ENCODE measurements at regions of chr11 and their contacts with region 1.

Region 1: DNA sequence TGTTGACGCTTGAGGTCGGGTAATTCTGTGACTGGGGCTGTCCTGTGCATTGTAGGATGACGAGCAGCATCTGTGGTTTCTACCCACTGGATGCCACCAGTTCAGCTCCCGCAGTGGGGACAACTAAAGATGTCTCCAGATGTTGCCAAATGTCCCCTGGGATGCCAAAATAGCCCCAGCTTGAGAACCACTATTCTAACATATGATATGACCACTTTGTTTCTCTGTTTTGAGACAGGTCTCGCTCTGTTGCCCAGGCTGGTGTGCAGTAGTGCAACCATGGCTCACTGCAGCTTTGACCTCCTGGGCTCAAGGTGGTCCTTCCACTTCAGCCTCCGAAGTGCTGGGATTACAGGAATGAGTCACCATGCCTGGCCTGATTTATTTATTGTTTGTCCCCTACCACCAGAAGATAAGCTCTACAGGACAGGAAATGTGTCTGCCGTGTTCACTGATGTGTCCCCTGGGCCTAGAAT is 4.4 kb upstream of the MEN1 start:
- DNase-seq: no peak
- ATAC-seq: no peak
- H3K4me3 ChIP-seq: no peak overlapping the region
- H3K4me3 Mint-ChIP-seq: no peak overlapping the region
- H3K27ac ChIP-seq: no peak overlapping the region
- H3K27ac Mint-ChIP-seq: peak overlapping the region in 1 of 2 donors; percentile 34
- H3K4me1 ChIP-seq: peaks cover 5 to 12% of the 10 kb centered on the region in 2 experiments
- H3K4me1 Mint-ChIP-seq: peaks cover 9 to 13% (median 11%) of the 10 kb centered on the region in 3 donors
- H3K27me3 ChIP-seq: no peaks in the 10 kb centered on the region
- H3K27me3 Mint-ChIP-seq: no peaks in the 10 kb centered on the region

Region 2: DNA sequence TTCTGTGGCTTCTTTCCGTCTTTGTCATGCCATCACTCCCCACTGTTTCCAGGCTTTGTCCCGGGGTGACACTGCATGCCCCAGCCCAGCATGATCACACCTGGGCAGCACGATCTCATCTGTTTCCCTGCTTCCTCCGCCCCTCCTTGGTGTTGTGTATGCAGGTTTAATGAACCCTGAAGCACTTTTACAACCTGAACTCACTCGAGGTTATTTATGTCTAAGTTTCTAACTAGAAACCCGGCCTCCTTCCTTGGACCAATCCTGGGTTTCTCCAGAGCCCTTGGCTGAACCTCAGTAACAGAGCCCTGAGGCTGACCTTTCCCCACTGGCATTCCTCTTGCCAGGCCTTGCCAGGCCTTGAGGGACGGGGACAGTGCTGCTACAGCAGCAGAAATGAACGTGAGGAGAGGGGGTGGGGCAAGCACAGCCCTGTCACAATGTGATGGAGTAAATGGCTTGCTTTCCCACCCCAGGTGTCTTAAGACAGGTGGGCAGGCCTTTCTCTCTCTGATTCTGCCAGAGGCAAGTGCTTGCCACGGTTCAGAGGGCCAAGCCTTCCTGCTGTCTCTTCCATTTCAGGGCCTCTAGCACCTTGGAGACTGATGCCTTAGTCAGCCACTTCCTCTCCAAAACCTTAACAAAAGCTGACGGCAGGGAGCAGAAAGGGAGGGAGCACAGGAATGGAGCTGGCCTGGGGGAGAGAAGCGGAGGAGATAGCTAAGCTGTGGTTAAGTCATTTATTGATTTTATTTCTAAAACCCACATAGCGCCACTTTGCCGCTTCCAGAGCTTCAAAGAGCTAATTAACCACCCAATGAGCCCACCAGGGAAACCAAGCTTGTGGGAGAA is 51.9 kb before region 1 on chr11:
- CTCF ChIA-PET with region 1: no interaction called
- POLR2A ChIA-PET with region 1: interaction called in 1 of 2 experiments, 10 read pairs
- DNase-seq: peak in 5 of 35 experiments; percentile 26 to 55 (median 28)
- ATAC-seq: peak in 3 of 4 experiments; percentile 4 to 14 (median 10)
- H3K4me3 ChIP-seq: peak overlapping the region in 1 of 2 donors; percentile 30
- H3K4me3 Mint-ChIP-seq: peak overlapping the region; percentile 25 to 86 (median 70)
- H3K27ac ChIP-seq: peak overlapping the region; percentile 74
- H3K27ac Mint-ChIP-seq: peak overlapping the region; percentile 88 to 97
- H3K4me1 ChIP-seq: peaks cover 65 to 100% of the 10 kb centered on the region in 2 experiments
- H3K4me1 Mint-ChIP-seq: peaks cover 83 to 87% (median 86%) of the 10 kb centered on the region in 3 donors
- H3K27me3 ChIP-seq: no peaks in the 10 kb centered on the region
- H3K27me3 Mint-ChIP-seq: no peaks in the 10 kb centered on the region

Region 3: GRCh38 chr11:64859542-64860414 is 45.0 kb after region 1 on chr11:
- CTCF ChIA-PET with region 1: no interaction called
- POLR2A ChIA-PET with region 1: no interaction called
- DNase-seq: peak in 29 of 35 experiments; percentile 38 to 86 (median 54)
- ATAC-seq: peak; percentile 78 to 81 (median 78)
- H3K4me3 ChIP-seq: peak overlapping the region; percentile 34 to 35
- H3K4me3 Mint-ChIP-seq: peak overlapping the region; percentile 70 to 82 (median 78)
- H3K27ac ChIP-seq: peak overlapping the region; percentile 93
- H3K27ac Mint-ChIP-seq: peak overlapping the region; percentile 97 to 99
- H3K4me1 ChIP-seq: peaks cover 81 to 100% of the 10 kb centered on the region in 2 experiments
- H3K4me1 Mint-ChIP-seq: peaks cover 86 to 94% (median 90%) of the 10 kb centered on the region in 3 donors
- H3K27me3 ChIP-seq: no peaks in the 10 kb centered on the region
- H3K27me3 Mint-ChIP-seq: no peaks in the 10 kb centered on the region

Region 4: GRCh38 chr11:64947208-64947814 is 132.6 kb after region 1 on chr11:
- CTCF ChIA-PET with region 1: no interaction called
- POLR2A ChIA-PET with region 1: interaction called in 1 of 2 experiments, 11 read pairs
- DNase-seq: no peak
- ATAC-seq: no peak
- H3K4me3 ChIP-seq: no peak overlapping the region
- H3K4me3 Mint-ChIP-seq: no peak overlapping the region
- H3K27ac ChIP-seq: no peak overlapping the region
- H3K27ac Mint-ChIP-seq: no peak overlapping the region
- H3K4me1 ChIP-seq: no peaks in the 10 kb centered on the region
- H3K4me1 Mint-ChIP-seq: no peaks in the 10 kb centered on the region
- H3K27me3 ChIP-seq: peaks cover 0 to 10% of the 10 kb centered on the region in 2 experiments
- H3K27me3 Mint-ChIP-seq: peaks cover 6% of the 10 kb centered on the region in 2 donors

Region 5: GRCh38 chr11:66659763-66660162 is 1845.0 kb after region 1 on chr11:
- CTCF ChIA-PET with region 1: no interaction called
- POLR2A ChIA-PET with region 1: interaction called in 1 of 2 experiments, 10 read pairs
- DNase-seq: no peak
- ATAC-seq: no peak
- H3K4me3 ChIP-seq: no peak overlapping the region
- H3K4me3 Mint-ChIP-seq: no peak overlapping the region
- H3K27ac ChIP-seq: no peak overlapping the region
- H3K27ac Mint-ChIP-seq: no peak overlapping the region
- H3K4me1 ChIP-seq: no peaks in the 10 kb centered on the region
- H3K4me1 Mint-ChIP-seq: peaks cover 18 to 30% (median 21%) of the 10 kb centered on the region in 3 donors
- H3K27me3 ChIP-seq: no peaks in the 10 kb centered on the region
- H3K27me3 Mint-ChIP-seq: no peaks in the 10 kb centered on the region